ENCODE measurements at regions of chr9 and their contacts with region 1.

Region 1: DNA sequence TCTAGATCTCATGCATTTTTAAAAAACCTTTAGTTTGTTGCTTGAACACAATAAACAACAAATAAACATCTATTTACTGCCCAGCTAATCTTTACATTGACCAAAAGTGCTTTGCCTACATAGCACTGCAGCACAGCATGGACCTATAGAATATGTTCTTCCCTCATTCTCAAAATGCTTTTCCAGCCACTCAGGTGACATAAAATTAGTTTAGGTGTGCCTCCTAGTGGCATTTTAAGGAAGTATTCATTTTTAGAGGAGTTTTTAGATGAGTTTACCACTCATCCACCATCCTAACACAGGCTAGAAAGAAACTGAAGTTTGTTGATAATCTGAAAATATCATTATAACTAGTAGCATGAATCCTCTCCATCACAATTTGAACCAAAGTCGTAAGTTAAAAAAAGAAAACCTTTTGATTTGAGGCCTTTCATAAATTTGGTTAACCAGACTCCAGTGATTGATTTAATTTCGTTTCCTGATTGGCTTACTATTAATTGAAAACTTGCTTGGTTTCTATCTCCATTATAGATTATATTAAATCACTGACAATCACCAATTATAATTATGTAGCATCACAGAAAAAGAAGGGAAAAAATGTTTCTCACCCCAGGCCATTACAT is 12.6 kb downstream of the PLGRKT start:
- DNase-seq: no peak
- H3K4me3 Mint-ChIP-seq: no peak overlapping the region
- H3K27ac Mint-ChIP-seq: no peak overlapping the region
- H3K4me1 Mint-ChIP-seq: peaks cover 9% of the 10 kb centered on the region
- H3K27me3 Mint-ChIP-seq: no peaks in the 10 kb centered on the region

Region 2: DNA sequence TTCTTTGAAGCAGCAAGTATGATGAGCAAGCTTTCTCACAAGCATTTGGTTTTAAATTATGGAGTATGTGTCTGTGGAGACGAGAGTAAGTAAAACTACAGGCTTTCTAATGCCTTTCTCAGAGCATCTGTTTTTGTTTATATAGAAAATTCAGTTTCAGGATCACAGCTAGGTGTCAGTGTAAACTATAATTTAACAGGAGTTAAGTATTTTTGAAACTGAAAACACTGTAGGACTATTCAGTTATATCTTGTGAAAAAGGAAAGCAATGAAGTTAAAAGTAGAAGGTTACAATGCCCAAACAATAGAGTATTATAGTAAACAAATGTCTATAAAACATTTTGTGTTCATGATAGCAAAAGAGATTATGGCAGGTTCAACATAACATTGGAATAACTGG is 351.4 kb before region 1 on chr9:
- intact Hi-C with region 1: loop called (anchors 10 kb)
- DNase-seq: no peak
- H3K4me3 Mint-ChIP-seq: no peak overlapping the region
- H3K27ac Mint-ChIP-seq: peak overlapping the region; percentile 4
- H3K4me1 Mint-ChIP-seq: peaks cover 17% of the 10 kb centered on the region
- H3K27me3 Mint-ChIP-seq: no peaks in the 10 kb centered on the region

Region 3: GRCh38 chr9:5382479-5382878 is 42.6 kb before region 1 on chr9:
- intact Hi-C with region 1: loop called (anchors 5 kb)
- DNase-seq: no peak
- H3K4me3 Mint-ChIP-seq: no peak overlapping the region
- H3K27ac Mint-ChIP-seq: no peak overlapping the region
- H3K4me1 Mint-ChIP-seq: peaks cover 18% of the 10 kb centered on the region
- H3K27me3 Mint-ChIP-seq: no peaks in the 10 kb centered on the region

Region 4: DNA sequence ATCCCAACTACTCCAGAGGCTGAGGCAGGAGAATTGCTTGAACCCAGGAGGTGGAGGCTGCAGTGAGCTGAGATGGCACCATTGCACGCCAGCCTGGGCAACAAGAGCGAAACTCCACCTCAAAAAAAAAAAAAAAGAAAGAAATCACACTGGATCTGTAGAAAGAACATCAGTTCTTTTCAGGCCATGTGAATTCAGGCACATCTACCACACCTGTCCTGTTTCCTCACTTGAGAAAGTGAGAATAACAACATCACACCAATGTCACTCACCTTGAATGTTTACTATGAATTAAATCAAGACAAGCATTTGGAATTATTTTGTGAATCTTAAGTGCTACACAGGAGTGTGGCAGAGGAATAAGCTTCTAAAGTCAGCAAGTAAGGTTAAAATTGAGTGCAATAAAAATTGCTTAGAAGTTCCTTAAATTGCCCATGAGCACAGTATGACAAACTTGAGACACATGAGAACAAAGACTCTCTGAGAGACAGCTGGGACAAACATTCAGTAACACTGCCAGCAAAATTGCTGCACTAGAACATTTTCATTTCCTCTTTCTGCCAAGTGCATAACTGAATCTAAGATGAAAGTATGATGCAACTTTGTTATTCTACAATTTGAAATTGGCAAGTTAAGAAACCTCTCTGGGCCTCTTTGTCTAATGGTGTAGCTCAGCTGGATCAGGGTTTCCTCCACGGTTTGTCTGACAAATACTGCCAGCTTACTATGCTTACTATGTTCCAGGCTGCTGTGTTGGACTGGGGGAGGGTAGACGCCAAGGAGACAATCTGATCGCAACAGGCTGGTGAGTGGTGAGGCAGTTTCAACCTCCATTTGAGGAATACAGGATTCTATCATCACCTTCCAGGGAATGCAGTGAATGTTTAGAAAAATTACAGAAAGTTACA is 201.9 kb after region 1 on chr9:
- intact Hi-C with region 1: no loop called
- DNase-seq: peak; percentile 44
- H3K4me3 Mint-ChIP-seq: peak overlapping the region; percentile 98
- H3K27ac Mint-ChIP-seq: peak overlapping the region; percentile 97
- H3K4me1 Mint-ChIP-seq: peaks cover 43% of the 10 kb centered on the region
- H3K27me3 Mint-ChIP-seq: no peaks in the 10 kb centered on the region

Region 5: DNA sequence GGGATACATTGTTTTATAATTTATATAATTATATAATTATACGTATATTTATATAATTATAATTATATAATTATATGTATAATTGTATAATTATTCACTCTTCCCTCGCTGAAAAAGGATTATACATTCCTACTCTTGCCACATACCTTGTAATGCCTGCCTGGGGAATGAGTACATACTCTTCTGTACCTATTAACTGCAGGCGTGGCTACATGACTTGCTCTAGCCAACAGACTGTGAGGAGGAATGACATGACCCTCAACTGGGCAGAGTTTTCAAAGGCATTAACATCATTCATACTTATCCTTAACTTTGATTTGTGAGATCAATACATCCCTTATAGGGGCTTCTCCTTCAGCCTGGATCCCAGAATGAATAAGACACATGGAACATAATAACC is 388.7 kb after region 1 on chr9:
- intact Hi-C with region 1: no loop called
- DNase-seq: no peak
- H3K4me3 Mint-ChIP-seq: no peak overlapping the region
- H3K27ac Mint-ChIP-seq: no peak overlapping the region
- H3K4me1 Mint-ChIP-seq: peaks cover 16% of the 10 kb centered on the region
- H3K27me3 Mint-ChIP-seq: no peaks in the 10 kb centered on the region

Measured in activated T-helper 2 cell treated with anti-CD3 and anti-CD28 coated beads, Interferon-gamma antibody, Interleukin-2, Interleukin-4, amounts not matched to agents 10 μg/mL and 5 μg/mL and 100 μg/mL, durations not matched to agents 14 hours and 24 hours and 36 hours (primary cell).